ENCODE measurements at regions of chr14 and their contacts with region 1.

Region 1: GRCh38 chr14:23567192-23568020 is at the start of gene AP1G2:
- DNase-seq: peak; percentile 95
- total RNA-seq, gene AP1G2: 31.5 to 36.5 TPM

Region 2: GRCh38 chr14:23335623-23336022 is 231.8 kb before region 1 on chr14:
- intact Hi-C with region 1: loop called in 1 of 2 experiments (anchors 10 kb)
- DNase-seq: no peak

Region 3: DNA sequence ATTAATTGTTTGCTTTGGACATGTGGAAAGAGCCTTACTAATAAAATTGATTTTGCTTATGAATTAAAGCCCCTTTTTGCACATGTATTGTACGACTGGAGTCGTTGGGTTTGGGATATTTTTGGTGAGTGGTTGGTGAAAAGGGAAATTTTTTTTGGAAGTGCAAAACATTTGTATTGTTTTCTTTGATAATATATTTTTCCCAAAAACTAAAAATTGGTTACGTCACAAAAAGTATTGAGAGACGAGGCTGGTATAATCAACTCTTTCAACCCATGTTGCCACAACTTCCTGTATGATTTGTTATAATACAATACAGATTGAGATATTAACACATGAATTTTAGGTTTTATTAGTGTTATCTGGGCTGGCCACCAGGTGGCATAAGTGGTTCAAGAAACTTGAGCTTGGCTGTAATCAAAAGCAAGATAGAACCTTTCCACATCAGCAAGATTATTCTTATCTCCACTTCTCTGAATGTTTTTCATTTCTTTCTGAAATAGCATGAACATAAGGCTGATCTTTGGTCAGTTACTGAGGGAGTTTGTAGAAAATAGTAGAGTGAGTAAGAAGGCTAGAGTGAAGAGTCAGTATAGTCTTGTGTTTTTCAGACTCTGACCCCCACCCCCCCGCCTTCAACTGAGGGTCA is 89.2 kb before region 1 on chr14:
- intact Hi-C with region 1: loop called in 1 of 2 experiments (anchors 2 kb)
- DNase-seq: no peak

Region 4: DNA sequence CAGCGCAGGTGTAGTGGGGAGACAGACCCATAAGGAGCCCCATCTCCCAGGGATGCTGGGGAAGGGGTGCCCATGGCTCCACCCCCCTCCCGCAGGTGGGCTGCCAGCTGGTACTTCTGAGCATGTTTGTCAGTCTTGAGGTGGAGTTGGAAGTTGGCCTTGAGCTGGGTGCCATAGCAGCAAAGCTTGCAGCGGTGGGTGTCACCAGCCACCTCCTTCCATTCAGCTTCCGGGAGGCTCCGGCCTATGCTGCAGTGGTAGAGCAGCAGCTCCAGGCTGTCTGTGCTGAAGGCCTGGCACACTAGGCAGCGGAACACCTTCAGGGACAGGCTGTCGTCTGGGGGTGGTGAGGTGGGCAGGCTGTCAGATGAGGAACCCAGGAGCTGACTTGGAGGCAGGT is 34.7 kb before region 1 on chr14:
- intact Hi-C with region 1: loop called in 1 of 2 experiments (anchors 1 kb)
- DNase-seq: peak; percentile 38

Region 5: GRCh38 chr14:23610090-23610814 is 42.8 kb after region 1 on chr14:
- intact Hi-C with region 1: no loop called
- DNase-seq: no peak